Ascending aorta (tissue), 2 donors: ENCODE measurements at regions of chr3 and their contacts with region 1.

Region 1: GRCh38 chr3:129934234-129935123 is 40.0 kb upstream of the TRH start:
- DNase-seq: no peak
- H3K4me3 ChIP-seq: peak overlapping the region in 1 of 2 donors; percentile 43
- H3K27ac ChIP-seq: no peak overlapping the region
- H3K4me1 ChIP-seq: no peaks in the 10 kb centered on the region
- H3K27me3 ChIP-seq: no peaks in the 10 kb centered on the region
- CTCF ChIP-seq: peak; percentile 81 to 91 (median 89)

Region 2: GRCh38 chr3:129383292-129383860 is 551.1 kb before region 1 on chr3:
- intact Hi-C with region 1: loop called (anchors 5 kb)
- DNase-seq: no peak
- H3K4me3 ChIP-seq: no peak overlapping the region
- H3K27ac ChIP-seq: no peak overlapping the region
- H3K4me1 ChIP-seq: no peaks in the 10 kb centered on the region
- H3K27me3 ChIP-seq: no peaks in the 10 kb centered on the region
- CTCF ChIP-seq: peak; percentile 54 to 68 (median 55)

Region 3: DNA sequence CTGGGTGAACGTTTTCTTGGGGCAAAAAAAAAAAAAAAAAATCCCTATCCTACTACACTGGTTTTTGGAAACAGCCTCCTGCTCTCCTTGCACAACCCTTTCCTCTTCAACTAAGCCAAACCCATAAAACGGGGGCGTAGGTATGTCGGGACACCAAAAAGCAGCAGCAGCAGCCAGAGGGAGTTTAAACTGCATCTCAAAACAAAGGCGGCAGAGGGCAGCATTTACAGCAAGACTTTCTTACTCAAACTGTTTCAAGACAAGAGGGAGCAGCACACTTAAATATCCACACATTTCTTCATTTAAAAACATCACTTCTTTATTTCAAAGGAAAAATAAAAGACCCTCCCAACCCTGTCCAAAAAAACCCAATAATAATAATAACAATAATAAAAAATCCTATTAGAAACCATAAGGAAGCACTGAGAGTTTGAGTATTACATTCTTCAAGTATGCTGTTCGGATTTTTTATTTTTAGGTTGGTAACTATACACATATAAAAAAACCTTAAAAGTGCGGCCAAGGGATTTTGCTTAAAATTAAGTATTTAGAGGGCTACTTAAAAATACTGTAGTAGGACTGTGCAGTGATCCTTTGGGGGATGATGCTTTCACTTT is 284.1 kb before region 1 on chr3:
- intact Hi-C with region 1: loop called (anchors 2 kb)
- DNase-seq: peak; percentile 12 to 90
- H3K4me3 ChIP-seq: no peak overlapping the region
- H3K27ac ChIP-seq: no peak overlapping the region
- H3K4me1 ChIP-seq: peaks cover 0 to 12% of the 10 kb centered on the region in 2 donors
- H3K27me3 ChIP-seq: no peaks in the 10 kb centered on the region
- CTCF ChIP-seq: peak; percentile 66 to 72 (median 69)